Adrenal gland (tissue), 19 donors: ENCODE measurements at regions of chr11 and their contacts with region 1.

Region 1: GRCh38 chr11:47766305-47767227 is 575 bp downstream of the FNBP4 start:
- DNase-seq: peak; percentile 73 to 87 (median 78)
- H3K4me3 ChIP-seq: peak overlapping the region; percentile 5 to 83 (median 70)
- H3K27ac ChIP-seq: peak overlapping the region; percentile 91 to 99 (median 97)
- H3K4me1 ChIP-seq: peaks cover 6 to 20% of the 10 kb centered on the region in 2 donors
- H3K27me3 ChIP-seq: no peaks in the 10 kb centered on the region
- CTCF ChIP-seq: no peak
- POLR2A ChIP-seq: no peak

Region 2: DNA sequence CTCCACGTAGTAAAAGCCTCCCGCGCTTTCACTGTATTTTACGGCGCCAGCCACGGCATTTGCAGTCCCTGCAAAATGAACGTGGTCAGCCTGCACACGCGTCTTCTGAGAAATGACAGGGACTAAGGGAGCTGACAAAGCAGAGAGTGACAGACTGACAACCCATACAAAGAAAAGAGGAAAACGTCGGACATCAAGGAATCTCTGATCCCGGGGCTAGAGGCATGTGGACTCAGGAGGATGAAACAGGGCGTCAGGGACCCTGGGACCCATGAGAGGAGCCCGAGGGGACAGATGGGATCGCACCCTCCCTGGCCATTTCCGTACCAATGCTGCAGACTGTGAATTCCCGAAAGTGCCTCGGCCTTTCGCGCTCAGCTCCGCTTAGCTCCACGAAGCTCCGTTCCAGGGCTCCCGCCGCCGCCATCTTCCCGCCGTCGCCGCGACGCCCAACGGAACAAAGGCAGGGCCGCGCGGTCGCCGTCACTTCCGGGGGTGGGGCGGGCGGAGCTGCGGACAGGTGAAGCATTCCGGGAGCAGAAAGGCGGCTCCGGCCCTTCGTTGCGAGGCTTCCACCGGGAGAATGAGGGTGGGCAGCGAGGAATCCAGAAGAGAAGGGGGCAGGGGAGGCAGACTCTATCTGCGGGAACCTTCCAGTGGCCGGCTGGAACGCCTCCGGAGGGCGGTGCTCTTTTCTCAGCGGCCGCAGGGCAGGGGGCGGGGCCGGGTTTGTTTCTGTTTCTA is 81.5 kb after region 1 on chr11 and contains the start of gene NUP160:
- intact Hi-C with region 1: loop called in 1 of 2 experiments (anchors 10 kb)
- DNase-seq: peak; percentile 72 to 88 (median 85)
- H3K4me3 ChIP-seq: peak within 1 kb of the TSS; percentile 69 to 95 (median 85)
- H3K27ac ChIP-seq: peak within 1 kb of the TSS; percentile 81 to 93 (median 90)
- H3K4me1 ChIP-seq: peaks cover 8 to 29% of the 10 kb centered on the region in 2 donors
- H3K27me3 ChIP-seq: no peaks in the 10 kb centered on the region
- CTCF ChIP-seq: no peak
- POLR2A ChIP-seq: peak; percentile 48 to 70
- total RNA-seq, gene NUP160: 10.1 to 29.8 (median 21.9) TPM

Region 3: DNA sequence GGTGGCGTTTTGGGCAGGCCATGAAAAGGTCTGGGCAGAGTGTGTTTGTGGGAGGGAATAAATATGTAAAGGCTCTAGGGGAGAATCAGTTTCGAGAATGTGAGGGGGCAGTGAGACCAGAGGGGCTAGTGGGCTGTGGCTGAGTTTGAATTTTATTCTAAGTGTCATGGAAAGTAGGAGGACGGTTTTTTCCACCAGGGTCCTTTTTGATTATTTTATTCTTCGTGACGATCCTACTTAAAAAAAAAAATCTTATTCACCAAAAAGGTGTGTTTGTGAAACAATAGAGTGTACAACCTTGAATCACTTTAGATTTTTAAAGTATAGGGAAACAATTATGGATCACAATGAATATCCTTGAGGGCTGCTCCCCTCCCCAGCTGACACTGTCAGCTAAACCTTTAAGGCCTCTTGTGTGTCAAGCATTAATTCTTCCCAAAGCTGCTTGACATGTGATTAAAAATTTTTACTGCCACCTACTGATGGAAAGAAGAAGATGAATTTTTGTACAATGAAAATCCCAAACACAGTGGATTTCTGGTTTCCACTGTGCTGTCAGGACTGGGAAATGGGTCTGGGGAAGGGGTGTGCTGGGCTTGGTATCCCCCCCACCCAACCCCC is 342.6 kb after region 1 on chr11:
- intact Hi-C with region 1: no loop called
- DNase-seq: no peak
- H3K4me3 ChIP-seq: peak overlapping the region in 2 of 4 donors; percentile 16 to 41
- H3K27ac ChIP-seq: peak overlapping the region in 3 of 5 donors; percentile 33 to 81 (median 58)
- H3K4me1 ChIP-seq: peaks cover 5 to 16% of the 10 kb centered on the region in 2 donors
- H3K27me3 ChIP-seq: no peaks in the 10 kb centered on the region
- CTCF ChIP-seq: peak in 5 of 6 experiments; percentile 17 to 39 (median 29)
- POLR2A ChIP-seq: no peak